ENCODE measurements at regions of chr7 and their contacts with region 1.

Region 1: DNA sequence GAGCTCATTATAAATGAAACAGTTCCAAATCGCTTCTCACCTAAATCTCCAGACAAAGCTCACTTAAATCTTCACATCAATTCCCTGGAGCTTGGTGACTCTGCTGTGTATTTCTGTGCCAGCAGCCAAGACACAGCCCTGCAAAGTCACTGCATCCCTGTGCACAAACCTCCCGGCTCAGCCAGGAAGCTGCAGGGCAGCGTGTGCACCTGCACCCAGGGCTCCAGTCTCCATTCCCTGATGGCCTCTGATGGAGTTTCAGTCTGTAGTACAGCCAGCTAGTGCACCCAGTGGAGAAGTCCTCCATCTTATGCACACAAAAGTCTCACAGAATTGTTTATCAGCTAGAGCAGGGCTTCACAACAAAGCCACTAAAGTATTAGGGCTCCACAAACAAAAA is 51.1 kb upstream of the PRSS58 start:
- DNase-seq: no peak
- ATAC-seq: no peak
- H3K4me3 ChIP-seq: no peak overlapping the region
- H3K4me3 Mint-ChIP-seq: no peak overlapping the region
- H3K27ac ChIP-seq: no peak overlapping the region
- H3K27ac Mint-ChIP-seq: no peak overlapping the region
- H3K4me1 ChIP-seq: peaks cover 11% of the 10 kb centered on the region
- H3K4me1 Mint-ChIP-seq: peaks cover 6 to 13% of the 10 kb centered on the region in 2 donors
- H3K27me3 ChIP-seq: no peaks in the 10 kb centered on the region
- H3K27me3 Mint-ChIP-seq: peaks cover 7 to 28% of the 10 kb centered on the region in 2 donors
- CTCF ChIP-seq: no peak

Region 2: GRCh38 chr7:142338633-142339501 is 29.9 kb after region 1 on chr7:
- intact Hi-C with region 1: loop called (anchors 1 kb)
- DNase-seq: peak in 1 of 2 donors; percentile 55
- ATAC-seq: no peak
- H3K4me3 ChIP-seq: no peak overlapping the region
- H3K4me3 Mint-ChIP-seq: no peak overlapping the region
- H3K27ac ChIP-seq: no peak overlapping the region
- H3K27ac Mint-ChIP-seq: no peak overlapping the region
- H3K4me1 ChIP-seq: no peaks in the 10 kb centered on the region
- H3K4me1 Mint-ChIP-seq: no peaks in the 10 kb centered on the region
- H3K27me3 ChIP-seq: no peaks in the 10 kb centered on the region
- H3K27me3 Mint-ChIP-seq: peaks cover 0 to 14% of the 10 kb centered on the region in 2 donors
- CTCF ChIP-seq: no peak

Region 3: GRCh38 chr7:142496545-142497041 is 187.7 kb after region 1 on chr7:
- intact Hi-C with region 1: no loop called
- DNase-seq: peak in 1 of 2 donors; percentile 71
- ATAC-seq: peak in 1 of 3 donors; percentile 68
- H3K4me3 ChIP-seq: no peak overlapping the region
- H3K4me3 Mint-ChIP-seq: no peak overlapping the region
- H3K27ac ChIP-seq: no peak overlapping the region
- H3K27ac Mint-ChIP-seq: no peak overlapping the region
- H3K4me1 ChIP-seq: no peaks in the 10 kb centered on the region
- H3K4me1 Mint-ChIP-seq: peaks cover 9 to 12% of the 10 kb centered on the region in 2 donors
- H3K27me3 ChIP-seq: peaks cover 4% of the 10 kb centered on the region
- H3K27me3 Mint-ChIP-seq: peaks cover 5 to 12% of the 10 kb centered on the region in 2 donors
- CTCF ChIP-seq: peak; percentile 71